BJ (cell line): ENCODE measurements at regions of chr19 and their contacts with region 1.

Region 1: DNA sequence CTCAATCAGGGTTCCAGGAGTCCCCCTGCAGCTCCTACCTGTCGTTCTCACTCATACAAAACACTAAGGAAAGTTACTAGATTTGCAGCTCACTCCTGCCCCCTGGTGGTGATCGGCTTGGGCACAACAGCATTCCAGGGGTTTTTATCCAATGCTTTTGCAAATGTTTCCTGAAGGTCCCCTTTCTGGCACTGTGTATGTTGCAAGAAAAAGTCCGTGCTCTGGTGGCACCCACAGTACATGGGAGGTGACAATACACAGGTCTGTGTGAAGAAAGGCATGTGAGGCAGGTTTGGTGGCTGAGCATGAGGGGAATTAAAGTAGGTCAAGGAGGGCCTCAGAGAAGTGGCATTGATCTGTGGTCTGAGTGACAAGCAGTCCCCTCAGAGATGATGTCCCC is 8.6 kb upstream of the TYK2 start:
- DNase-seq: no peak
- H3K4me3 ChIP-seq: no peak overlapping the region
- H3K27me3 ChIP-seq: no peaks in the 10 kb centered on the region
- CTCF ChIP-seq: peak; percentile 93

Region 2: DNA sequence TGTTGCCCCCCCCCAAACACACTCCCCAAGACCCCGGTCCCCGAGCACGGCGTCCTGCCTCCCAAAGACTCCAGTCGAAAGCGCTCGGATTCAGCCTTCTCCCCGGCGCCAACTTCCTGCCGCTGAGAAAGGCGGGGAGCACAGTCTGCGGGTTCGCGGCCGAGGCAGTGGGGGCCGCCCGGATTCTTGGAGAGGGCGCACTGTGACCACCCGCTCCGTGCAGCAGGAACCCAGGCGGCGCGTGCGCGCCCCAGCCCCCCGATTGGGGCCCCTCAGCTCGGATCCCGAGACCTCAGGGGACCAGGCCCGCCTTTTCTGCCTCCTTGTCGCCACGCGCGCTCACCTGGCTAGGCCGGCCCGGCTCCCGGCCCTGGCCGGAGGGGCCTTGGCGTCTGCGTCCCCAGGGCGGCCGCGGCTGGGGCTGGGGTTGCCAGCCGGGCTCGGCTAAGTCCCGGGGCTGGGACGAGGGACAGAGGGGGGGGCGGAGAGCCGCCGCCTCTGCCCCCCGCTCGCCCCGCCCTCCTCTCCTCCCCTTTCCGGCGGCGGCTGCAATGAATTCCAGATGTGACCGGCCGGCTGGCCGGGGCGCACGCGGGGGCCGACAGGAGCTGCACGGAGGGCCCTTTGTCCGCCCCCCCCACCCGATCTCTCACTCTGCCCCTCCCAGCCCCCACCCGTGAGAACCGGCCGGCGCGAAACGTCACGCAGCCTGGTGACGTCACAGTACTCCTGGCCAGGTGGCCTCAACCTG is 157.9 kb before region 1 on chr19 and contains the start of gene S1PR2:
- CTCF ChIA-PET with region 1: no interaction called
- POLR2A ChIA-PET with region 1: no interaction called
- DNase-seq: no peak
- H3K4me3 ChIP-seq: peak within 1 kb of the TSS; percentile 95
- H3K27me3 ChIP-seq: no peaks in the 10 kb centered on the region
- CTCF ChIP-seq: no peak
- polyA plus RNA-seq, gene S1PR2: 10.4 and 12.5 TPM in 2 replicates

Region 3: DNA sequence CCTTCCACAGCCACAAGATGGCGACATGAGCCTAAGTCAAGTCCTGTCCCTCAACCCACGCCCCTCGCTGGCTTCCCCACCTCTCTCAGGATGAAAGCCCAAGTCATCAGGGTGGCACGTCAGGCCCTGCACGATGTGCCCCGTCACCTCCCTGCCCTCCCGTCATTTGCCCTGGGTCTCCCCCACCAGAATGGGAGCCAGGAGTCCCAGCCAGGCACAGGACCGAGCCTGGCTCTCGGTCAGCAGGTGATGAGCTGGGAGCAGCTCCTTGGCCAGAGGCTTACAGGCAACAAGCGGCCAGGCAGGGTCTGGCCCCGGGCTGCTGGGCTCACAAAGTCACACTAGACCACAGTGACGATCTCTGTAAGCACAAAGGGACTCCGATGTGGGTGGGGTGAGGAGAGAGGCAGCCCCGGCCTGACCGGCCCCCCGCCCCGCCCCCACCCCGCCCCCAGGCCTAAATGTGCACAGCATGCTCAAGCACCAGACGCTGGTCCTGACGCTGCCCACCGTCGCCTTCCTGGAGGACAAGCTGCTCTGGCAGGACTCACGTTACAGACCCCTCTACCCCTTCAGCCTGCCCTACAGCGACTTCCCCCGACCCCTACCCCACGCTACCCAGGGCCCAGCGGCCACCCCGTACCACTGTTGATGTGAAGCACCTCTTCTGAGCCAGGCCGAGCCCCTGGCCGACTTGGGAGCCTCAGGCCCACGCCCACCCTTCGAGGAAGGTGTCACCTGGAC is 129.6 kb before region 1 on chr19:
- CTCF ChIA-PET with region 1: interaction called, 228 read pairs
- POLR2A ChIA-PET with region 1: interaction called, 12 read pairs
- DNase-seq: no peak
- H3K4me3 ChIP-seq: no peak overlapping the region
- H3K27me3 ChIP-seq: no peaks in the 10 kb centered on the region
- CTCF ChIP-seq: peak; percentile 80

Region 4: GRCh38 chr19:10279737-10280442 is 109.1 kb before region 1 on chr19:
- CTCF ChIA-PET with region 1: interaction called, 13 read pairs
- POLR2A ChIA-PET with region 1: no interaction called
- DNase-seq: no peak
- H3K4me3 ChIP-seq: no peak overlapping the region
- H3K27me3 ChIP-seq: no peaks in the 10 kb centered on the region
- CTCF ChIP-seq: no peak

Region 5: DNA sequence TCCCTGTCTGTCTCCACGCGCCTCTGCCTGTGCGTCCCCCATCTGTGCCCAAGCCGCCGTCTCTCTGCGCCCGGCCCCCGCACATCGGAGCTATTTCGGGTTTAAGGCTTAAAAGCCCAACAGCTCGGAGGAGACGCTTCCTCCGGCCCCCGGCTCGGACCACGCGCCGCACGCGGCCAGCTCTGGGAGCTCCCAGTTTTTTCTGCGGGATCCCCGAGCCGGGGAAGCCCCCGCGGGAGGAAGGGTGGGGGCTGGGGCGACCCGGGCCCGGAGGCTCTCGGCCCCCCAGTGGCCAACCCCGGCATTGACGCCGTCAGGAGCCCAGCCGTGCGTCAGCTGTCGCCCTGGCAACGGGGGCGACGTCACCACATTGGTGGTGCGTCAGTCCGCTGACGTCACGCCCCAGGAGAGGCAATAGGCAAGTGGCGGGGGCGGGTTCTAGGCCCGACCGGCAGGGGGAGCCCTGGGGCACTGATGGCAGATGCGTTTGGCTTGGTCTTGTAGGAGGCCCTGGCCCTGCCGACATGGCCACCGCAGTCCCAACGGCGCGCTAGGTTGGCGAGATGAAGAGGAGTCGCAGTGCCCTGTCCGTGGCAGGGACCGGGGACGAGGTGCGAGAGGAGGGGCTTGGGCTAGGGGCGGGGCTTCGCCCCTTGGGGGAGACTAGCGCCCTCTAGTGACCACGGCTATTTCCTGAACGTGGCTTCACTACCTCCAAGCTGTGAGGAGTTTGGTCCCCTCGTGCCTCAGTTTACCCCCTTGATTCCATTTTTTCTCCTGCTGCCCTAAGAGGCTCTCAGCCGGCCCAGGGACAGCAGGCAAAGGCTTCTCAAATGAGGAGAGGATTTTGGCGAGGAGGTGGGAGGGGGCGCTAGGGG is 27.7 kb after region 1 on chr19:
- CTCF ChIA-PET with region 1: interaction called, 12 read pairs
- POLR2A ChIA-PET with region 1: no interaction called
- DNase-seq: no peak
- H3K4me3 ChIP-seq: peak overlapping the region; percentile 54
- H3K27me3 ChIP-seq: peaks cover 26% of the 10 kb centered on the region
- CTCF ChIP-seq: peak; percentile 82